HAP-1 (cell line): ENCODE measurements at regions of chr10 and their contacts with region 1.

Region 1: DNA sequence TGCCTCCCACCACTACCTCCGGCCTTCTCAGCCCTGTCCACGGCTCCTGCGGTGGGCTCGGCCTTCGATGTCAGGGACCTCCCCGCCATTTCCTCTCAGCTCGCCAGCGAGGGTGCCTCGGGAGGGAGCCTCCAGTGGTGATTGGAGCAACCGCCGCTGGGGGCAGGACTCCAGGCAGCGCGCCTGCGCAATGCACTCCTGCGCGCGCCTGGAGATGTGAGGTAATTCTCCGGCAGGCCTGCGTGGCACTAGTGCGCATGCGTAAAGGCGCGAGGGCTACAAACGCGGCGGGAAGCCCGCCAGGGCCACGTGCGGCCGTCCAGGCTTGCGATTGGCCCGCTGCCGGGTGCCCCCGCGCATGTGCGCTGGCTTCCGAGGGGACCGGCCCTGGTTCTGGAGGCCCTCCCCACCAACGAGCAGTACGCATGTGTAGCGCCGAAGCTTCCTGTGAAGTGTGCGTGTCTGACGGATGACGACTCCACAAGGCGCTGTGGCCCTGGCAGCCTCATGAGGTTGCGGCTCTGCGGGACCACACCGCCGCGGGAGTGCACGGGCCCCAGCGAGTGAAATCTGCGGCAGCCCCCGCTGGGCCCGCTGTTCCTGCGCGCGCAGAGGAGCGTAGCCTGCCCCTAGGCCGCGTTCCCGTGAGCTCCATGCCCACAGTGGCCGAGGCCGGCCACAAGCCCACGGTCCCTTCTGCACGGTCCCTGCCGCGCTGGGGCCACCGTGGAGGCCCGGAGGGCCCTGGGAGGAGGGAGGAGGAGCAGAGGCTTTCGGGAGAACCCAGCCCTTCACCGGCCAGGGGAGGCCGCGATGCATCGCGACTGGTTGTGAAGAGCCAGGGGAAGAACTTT is at the start of gene SYCE1:
- DNase-seq: no peak
- H3K4me3 ChIP-seq: no peak within 1 kb of the TSS
- H3K4me1 ChIP-seq: no peaks in the 10 kb centered on the region
- H3K27me3 ChIP-seq: no peaks in the 10 kb centered on the region

Region 2: DNA sequence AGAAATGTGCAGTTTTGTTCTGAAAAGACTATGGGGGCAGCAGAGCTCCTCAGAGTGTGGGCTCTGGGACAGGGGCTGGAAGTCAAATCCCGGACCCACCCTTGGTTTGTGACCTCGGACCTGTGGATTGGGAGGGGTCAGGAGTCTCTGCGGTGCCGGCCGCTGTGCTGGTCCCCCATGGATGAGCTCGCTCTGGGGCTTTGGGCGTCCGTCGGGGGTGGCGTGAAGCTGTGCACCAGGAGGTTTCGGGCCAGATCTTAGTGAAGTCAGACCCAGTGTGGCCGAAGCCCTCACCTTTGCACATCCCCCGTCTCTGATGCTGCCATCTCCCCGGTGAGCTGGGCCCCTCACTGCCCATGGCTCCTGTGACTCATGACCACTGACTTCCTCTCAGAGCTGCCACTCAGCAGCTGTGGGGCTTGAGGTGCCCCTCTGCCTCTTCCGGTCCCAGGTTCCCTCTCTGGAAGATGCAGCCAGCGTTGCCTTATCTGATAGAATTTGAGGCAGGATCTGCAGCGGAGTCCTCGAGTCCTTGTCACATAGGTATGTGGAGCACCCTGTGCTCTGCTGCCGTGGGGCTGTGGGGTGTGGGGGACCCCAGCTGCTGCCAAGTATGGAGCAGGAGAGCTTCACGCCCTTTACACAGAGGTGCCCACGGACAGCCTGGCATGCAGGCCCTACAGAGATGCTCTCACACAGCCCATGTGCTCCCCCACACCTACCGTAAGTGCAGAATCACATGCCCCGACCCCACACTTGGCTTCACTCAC is 123.3 kb before region 1 on chr10:
- in situ Hi-C with region 1: loop called (anchors 10 kb)
- DNase-seq: no peak
- H3K4me3 ChIP-seq: no peak overlapping the region
- H3K4me1 ChIP-seq: no peaks in the 10 kb centered on the region
- H3K27me3 ChIP-seq: no peaks in the 10 kb centered on the region